ENCODE measurements at regions of chr2 and their contacts with region 1.

Region 1: DNA sequence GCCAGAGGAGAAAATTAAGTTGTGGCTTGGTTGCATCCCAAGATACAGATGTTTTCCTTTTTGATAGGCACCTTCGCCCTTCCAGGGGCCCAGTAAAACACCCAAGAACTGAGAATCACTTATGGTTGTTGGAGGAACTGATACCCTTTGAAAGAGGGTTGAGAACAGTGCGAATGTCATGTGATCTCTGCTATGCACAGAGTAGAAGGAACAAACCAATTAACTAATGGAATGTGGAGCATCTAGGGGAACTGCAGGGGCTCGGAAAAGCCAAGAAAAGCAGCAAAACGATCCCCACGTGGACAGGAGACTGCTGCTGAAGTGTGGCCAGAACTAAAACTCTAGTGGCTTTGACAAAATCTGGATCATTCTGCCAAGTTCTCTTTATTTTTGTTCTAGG is 58.8 kb downstream of the APOB start:
- DNase-seq: no peak
- ATAC-seq: no peak
- H3K4me3 ChIP-seq: no peak overlapping the region
- H3K27ac ChIP-seq: no peak overlapping the region
- H3K4me1 ChIP-seq: no peaks in the 10 kb centered on the region
- H3K27me3 ChIP-seq: peaks cover 0 to 8% (median 0%) of the 10 kb centered on the region in 7 donors
- CTCF ChIP-seq: no peak

Region 2: DNA sequence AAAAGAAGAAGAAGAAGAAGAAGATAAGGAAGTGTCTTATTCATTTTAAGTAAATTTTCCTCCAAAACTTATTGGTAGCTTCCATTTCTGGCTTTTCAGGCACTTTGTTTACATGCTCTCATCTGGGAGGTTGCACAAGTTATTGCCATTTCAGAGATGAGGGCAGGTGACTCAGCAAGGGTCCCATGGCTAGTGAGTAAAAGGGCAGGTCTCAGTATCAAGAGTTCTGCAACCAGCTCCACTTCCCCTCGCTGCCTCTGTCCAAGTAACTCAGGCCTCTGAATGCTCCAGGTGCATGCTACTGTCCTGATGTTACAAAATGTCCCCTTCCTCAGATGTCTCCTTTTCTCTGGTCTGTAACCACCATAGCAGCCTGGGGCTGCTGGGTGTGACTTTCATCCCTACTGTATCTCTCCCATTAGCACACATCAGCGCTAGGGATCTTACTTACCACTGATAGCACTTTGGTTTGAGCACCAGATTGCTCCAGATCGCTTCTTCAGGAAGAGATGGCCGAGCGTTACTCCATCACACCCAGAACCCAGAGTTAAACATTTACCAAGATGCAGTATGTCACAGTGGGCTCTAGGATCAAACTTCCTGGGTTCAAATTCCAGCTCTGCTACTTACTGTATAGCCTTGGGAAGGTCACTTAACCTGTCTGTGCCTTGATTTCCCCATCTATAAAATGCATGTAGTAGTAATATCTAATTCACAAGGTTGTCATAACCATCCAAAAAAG is 876.2 kb before region 1 on chr2:
- intact Hi-C with region 1: no loop called
- DNase-seq: no peak
- ATAC-seq: no peak
- H3K4me3 ChIP-seq: no peak overlapping the region
- H3K27ac ChIP-seq: no peak overlapping the region
- H3K4me1 ChIP-seq: peaks cover 0 to 33% (median 6%) of the 10 kb centered on the region in 9 donors
- H3K27me3 ChIP-seq: peaks cover 0 to 18% (median 8%) of the 10 kb centered on the region in 7 donors
- CTCF ChIP-seq: no peak

Region 3: GRCh38 chr2:20925265-20925889 is 59.7 kb before region 1 on chr2:
- intact Hi-C with region 1: loop called in 1 of 10 experiments (anchors 2 kb)
- DNase-seq: no peak
- ATAC-seq: no peak
- H3K4me3 ChIP-seq: no peak overlapping the region
- H3K27ac ChIP-seq: no peak overlapping the region
- H3K4me1 ChIP-seq: no peaks in the 10 kb centered on the region
- H3K27me3 ChIP-seq: peaks cover 0 to 25% (median 0%) of the 10 kb centered on the region in 7 donors
- CTCF ChIP-seq: no peak

Region 4: DNA sequence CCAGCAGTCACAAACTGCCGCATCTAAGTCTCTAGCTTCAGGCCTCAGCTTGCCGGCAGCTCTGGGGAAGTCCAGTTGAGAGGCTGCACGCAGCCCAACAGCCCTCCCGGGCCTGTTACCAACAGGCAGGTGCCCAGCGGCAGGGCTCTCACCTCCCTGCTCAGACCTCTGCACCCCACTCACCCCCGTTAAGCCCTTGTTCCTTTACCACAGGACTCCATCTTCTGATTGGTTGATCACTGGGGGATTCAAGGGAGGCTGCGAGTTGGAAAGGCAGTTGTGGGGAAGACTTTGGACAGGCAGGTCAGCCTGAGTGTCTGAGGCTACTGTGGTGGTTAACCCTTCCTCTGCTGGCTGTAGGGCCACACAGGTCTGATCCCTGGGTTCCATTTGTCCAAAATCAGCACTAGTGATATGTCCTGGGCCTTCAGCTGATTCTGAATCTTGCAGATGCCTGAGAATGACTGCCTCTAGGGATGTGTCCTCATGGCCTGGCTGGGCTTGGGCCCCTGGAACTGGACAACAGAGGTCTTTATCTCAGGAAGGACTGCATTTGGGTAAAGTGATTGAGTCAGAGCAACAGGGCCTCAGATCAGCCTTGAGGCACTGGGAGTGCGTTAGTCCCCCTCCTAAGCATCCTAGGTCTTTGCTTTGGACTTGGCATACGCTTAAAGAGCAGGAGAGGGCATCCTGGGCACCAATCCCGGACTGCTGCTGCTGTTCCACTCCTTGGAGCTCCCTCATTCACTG is 29.6 kb before region 1 on chr2:
- intact Hi-C with region 1: loop called in 1 of 10 experiments (anchors 2 kb)
- DNase-seq: no peak
- ATAC-seq: no peak
- H3K4me3 ChIP-seq: no peak overlapping the region
- H3K27ac ChIP-seq: no peak overlapping the region
- H3K4me1 ChIP-seq: no peaks in the 10 kb centered on the region
- H3K27me3 ChIP-seq: peaks cover 0 to 24% (median 15%) of the 10 kb centered on the region in 7 donors
- CTCF ChIP-seq: no peak